ENCODE measurements at regions of chr5 and their contacts with region 1.

Region 1: GRCh38 chr5:127492854-127493738 is 24.3 kb upstream of the PRRC1 start:
- DNase-seq: peak; percentile 33
- H3K4me3 ChIP-seq: no peak overlapping the region
- H3K27ac ChIP-seq: no peak overlapping the region
- H3K4me1 ChIP-seq: no peaks in the 10 kb centered on the region
- H3K27me3 ChIP-seq: peaks cover 8% of the 10 kb centered on the region
- CTCF ChIP-seq: peak; percentile 65 to 75

Region 2: DNA sequence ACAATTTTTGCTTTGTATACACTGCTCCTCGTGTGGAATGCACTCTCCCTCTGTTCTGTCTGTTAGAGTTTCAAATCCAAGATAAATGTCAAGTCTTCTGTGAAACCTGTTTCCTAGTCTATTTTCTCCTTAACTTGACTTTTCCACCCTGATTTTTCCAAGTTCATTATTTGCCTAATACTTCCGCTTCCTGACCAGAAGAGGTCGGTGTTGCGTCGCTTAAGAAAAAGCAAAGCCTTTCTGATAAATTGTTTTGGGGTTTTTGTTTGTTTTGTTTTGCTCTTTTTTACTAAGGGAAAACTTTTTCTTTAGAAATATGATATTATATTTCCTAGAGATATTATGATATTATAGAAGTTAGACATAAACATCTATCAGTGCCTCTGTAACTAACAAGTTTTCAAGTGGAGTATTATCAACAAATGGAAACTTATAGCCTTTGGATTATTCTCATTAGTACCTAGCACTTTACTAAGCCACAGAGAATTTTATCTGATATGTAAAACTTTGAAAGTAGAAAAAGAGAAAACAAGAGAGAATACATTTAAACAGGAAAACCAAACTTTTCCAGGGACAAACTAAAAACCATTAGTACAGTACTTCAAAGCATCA is 836.6 kb before region 1 on chr5:
- CTCF ChIA-PET with region 1: no interaction called
- dilution Hi-C with region 1: no loop called
- in situ Hi-C with region 1: no loop called
- intact Hi-C with region 1: loop called (anchors 5 kb)
- DNase-seq: no peak
- H3K4me3 ChIP-seq: no peak overlapping the region
- H3K27ac ChIP-seq: no peak overlapping the region
- H3K4me1 ChIP-seq: no peaks in the 10 kb centered on the region
- H3K27me3 ChIP-seq: no peaks in the 10 kb centered on the region
- CTCF ChIP-seq: peak; percentile 87 to 88

Region 3: GRCh38 chr5:126837906-126838539 is 655.1 kb before region 1 on chr5:
- CTCF ChIA-PET with region 1: no interaction called
- dilution Hi-C with region 1: no loop called
- in situ Hi-C with region 1: no loop called
- intact Hi-C with region 1: loop called (anchors 5 kb)
- DNase-seq: no peak
- H3K4me3 ChIP-seq: no peak overlapping the region
- H3K27ac ChIP-seq: no peak overlapping the region
- H3K4me1 ChIP-seq: no peaks in the 10 kb centered on the region
- H3K27me3 ChIP-seq: no peaks in the 10 kb centered on the region
- CTCF ChIP-seq: peak in 1 of 2 donors; percentile 37

Region 4: DNA sequence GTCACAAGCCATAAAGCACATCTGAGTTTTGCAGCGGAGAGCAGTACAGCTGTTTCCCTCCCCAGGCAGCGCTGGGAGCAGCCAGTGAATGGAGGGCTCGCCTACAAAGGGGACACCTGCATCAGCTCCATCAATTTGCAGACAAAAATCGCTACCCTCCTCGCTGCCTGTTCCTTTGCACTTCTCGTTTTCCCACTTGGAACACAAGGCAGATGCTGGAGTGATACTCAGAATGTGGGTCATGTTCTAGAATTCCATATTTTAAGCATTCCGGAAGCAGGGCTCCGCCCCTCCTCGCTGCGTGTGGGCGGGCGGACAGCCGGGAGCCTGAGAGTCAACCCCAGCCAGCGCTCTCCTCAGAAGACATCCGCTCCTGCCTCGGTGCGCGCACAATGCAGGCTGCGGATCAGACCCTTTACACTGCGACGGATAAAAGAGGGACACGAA is 624.1 kb before region 1 on chr5:
- CTCF ChIA-PET with region 1: no interaction called
- dilution Hi-C with region 1: no loop called
- in situ Hi-C with region 1: loop called in 1 of 2 experiments (anchors 25 kb)
- intact Hi-C with region 1: no loop called
- DNase-seq: peak; percentile 3
- H3K4me3 ChIP-seq: peak overlapping the region in 2 of 3 experiments; percentile 11 to 26
- H3K27ac ChIP-seq: no peak overlapping the region
- H3K4me1 ChIP-seq: peaks cover 4% of the 10 kb centered on the region
- H3K27me3 ChIP-seq: no peaks in the 10 kb centered on the region
- CTCF ChIP-seq: no peak

Region 5: DNA sequence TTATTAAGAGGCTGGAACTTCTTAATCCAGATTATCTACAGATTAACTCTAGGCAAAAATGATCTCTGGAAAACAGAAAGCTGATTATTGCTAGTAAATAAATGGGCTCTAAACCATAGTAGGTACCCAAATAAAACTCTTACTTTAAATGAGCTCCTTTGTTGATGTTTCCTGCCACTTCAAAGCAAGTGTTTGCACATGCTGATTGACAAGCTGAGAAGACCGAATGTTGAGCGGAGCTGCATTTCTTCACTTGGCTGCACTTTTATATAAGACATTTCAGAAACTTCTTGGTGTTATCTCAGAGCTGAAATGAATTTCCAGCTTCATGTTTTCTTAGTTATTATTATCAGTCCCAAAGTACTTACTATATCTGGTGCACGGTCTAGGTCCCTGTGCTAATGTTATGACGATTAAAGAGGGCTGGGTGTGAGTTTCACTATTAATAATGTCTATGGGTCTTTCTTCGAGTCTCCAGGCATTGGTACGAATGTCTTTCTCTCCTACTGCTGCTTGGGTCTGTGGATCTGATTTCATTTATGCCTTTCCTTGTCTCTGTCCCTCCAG is 97.1 kb after region 1 on chr5:
- CTCF ChIA-PET with region 1: no interaction called
- dilution Hi-C with region 1: no loop called
- in situ Hi-C with region 1: no loop called
- intact Hi-C with region 1: no loop called
- DNase-seq: no peak
- H3K4me3 ChIP-seq: no peak overlapping the region
- H3K27ac ChIP-seq: no peak overlapping the region
- H3K4me1 ChIP-seq: no peaks in the 10 kb centered on the region
- H3K27me3 ChIP-seq: peaks cover 2% of the 10 kb centered on the region
- CTCF ChIP-seq: no peak